Activated naive CD4-positive, alpha-beta T cell treated with anti-CD3 and anti-CD28 coated beads for 36 hours (primary cell): ENCODE measurements at regions of chr3 and their contacts with region 1.

Region 1: GRCh38 chr3:71149959-71150954 is 433.3 kb downstream of the FOXP1 start:
- DNase-seq: no peak
- H3K4me3 Mint-ChIP-seq: peak overlapping the region; percentile 56
- H3K27ac Mint-ChIP-seq: peak overlapping the region; percentile 68
- H3K4me1 Mint-ChIP-seq: peaks cover 64% of the 10 kb centered on the region
- H3K27me3 Mint-ChIP-seq: no peaks in the 10 kb centered on the region

Region 2: DNA sequence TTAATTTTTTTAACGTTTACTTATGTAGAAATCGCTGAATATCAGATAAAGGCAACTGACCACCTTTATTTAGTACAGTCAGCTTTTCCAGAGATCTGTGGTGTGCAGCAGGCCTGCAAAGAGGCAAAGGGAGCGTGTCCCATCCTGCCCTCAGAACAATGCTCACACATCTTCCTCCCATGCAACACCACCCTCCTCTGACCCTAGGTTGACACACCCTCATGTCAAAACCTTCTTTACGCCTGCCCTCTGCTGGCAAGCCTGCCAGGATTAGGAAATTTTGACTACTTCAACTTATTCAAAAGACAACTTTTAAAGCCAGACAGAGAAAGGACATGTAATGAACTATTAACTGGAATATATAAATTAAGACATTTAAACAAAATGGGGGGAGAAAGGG is 80.5 kb before region 1 on chr3:
- CTCF ChIA-PET with region 1: no interaction called
- intact Hi-C with region 1: no loop called
- DNase-seq: peak; percentile 92
- H3K4me3 Mint-ChIP-seq: no peak overlapping the region
- H3K27ac Mint-ChIP-seq: peak overlapping the region; percentile 57
- H3K4me1 Mint-ChIP-seq: peaks cover 78% of the 10 kb centered on the region
- H3K27me3 Mint-ChIP-seq: no peaks in the 10 kb centered on the region

Region 3: DNA sequence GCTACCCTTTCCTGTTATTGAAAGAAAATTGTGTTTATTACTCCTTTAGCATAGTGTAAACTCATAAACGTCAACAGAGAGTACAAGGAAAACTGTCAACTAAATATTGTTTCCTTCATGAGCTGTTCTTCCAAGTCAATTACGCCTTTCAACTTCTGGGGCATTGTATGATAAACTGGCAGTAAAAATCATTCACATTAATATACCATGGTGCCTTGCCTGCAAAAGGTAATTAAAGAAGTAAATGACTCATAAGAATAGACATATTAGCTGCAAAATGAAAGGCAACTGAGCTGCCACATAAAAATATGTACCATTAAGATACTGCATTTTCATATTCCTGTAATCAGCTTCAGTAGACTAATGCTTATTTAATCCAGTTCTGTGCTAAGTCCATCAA is 14.0 kb before region 1 on chr3:
- CTCF ChIA-PET with region 1: no interaction called
- intact Hi-C with region 1: no loop called
- DNase-seq: no peak
- H3K4me3 Mint-ChIP-seq: no peak overlapping the region
- H3K27ac Mint-ChIP-seq: peak overlapping the region; percentile 47
- H3K4me1 Mint-ChIP-seq: peaks cover 79% of the 10 kb centered on the region
- H3K27me3 Mint-ChIP-seq: no peaks in the 10 kb centered on the region

Region 4: DNA sequence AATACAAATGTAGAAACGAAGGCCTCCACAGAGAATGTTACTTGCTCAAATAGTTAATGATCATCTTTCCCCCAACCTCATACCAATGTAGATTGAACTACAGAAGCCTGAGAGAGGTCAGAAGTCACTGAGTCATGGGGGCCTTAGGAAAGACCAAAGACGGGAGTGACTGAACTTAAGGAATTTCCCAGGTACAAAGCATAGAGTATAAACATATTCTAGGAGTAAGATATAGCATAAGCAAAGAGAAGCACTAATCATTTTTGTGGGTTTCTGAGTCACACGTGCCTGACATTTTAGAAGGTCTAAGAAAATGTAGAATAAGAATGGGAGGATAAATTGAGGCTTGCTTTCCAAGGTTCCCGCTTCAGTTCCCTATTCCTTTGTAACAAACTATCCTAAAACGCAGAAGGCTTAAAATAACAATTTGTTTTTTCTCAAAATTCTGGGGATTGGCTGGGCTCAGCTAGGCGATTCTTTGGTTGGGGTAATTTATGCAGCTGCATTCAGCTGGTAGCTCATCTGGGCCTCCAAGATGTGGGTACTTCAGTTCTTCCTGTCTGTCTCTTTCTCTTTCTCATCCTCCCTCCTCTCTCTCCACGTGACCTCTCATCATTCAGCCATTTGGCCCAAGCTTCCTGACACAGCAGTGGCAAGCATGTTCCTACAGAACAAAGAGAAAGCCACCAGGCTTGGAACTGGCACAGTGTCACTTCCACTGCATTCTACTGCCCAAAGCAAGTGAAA is 10.7 kb after region 1 on chr3:
- CTCF ChIA-PET with region 1: interaction called, 6 read pairs
- intact Hi-C with region 1: loop called (anchors 1 kb)
- DNase-seq: peak; percentile 44
- H3K4me3 Mint-ChIP-seq: peak overlapping the region; percentile 33
- H3K27ac Mint-ChIP-seq: peak overlapping the region; percentile 88
- H3K4me1 Mint-ChIP-seq: peaks cover 79% of the 10 kb centered on the region
- H3K27me3 Mint-ChIP-seq: no peaks in the 10 kb centered on the region

Region 5: GRCh38 chr3:71185733-71186455 is 35.6 kb after region 1 on chr3:
- CTCF ChIA-PET with region 1: interaction called, 4 read pairs
- intact Hi-C with region 1: loop called (anchors 1 kb)
- DNase-seq: peak; percentile 50
- H3K4me3 Mint-ChIP-seq: no peak overlapping the region
- H3K27ac Mint-ChIP-seq: peak overlapping the region; percentile 37
- H3K4me1 Mint-ChIP-seq: peaks cover 67% of the 10 kb centered on the region
- H3K27me3 Mint-ChIP-seq: no peaks in the 10 kb centered on the region